Activated CD4-positive, alpha-beta memory T cell treated with anti-CD3 and anti-CD28 coated beads for 36 hours (primary cell): ENCODE measurements at regions of chr6 and their contacts with region 1.

Region 1: DNA sequence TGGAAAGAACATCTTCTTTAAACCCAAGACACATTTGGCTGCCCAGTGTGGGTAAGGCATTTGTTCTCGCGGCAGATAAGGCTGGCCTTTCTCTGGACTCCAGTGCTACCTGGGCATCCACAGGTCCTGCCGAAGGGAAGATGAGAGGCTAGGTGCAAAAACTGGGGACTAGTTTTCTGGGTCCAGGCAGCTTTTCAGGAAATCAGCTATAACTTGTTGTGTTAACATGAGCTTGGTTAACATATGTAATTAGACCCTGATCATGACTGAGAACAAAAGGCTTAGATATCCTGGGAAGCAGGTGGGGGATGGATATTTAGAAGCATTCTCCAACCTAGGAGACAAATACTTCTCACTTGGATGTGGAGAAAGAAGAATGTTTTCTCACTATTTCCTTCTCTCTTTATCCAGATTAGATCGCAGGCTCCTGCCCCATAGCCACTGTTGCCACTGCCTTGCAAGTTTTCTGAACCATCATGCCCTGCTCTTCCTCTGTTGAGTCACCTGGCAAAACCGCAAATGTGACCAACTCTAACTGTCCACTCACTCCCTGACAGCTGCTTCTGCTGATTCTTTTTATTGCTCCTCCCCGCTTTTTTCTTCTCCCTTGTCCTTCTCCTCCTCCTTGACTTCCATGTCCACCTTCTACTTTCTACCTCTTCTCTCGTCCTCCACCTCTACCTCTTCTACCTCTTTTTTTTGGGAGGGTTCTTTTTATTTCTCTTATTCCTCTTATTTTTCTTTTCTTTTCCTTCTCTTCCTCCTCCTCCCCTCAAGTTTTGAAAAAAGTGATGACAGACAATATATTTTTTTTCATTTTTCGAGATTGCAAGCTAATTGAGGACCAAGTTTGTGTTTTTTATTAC is 258.1 kb downstream of the UTRN start:
- DNase-seq: peak; percentile 32
- H3K4me3 Mint-ChIP-seq: no peak overlapping the region
- H3K27ac Mint-ChIP-seq: no peak overlapping the region
- H3K4me1 Mint-ChIP-seq: peaks cover 20% of the 10 kb centered on the region
- H3K27me3 Mint-ChIP-seq: no peaks in the 10 kb centered on the region

Region 2: GRCh38 chr6:143940011-143940597 is 603.1 kb before region 1 on chr6:
- CTCF ChIA-PET with region 1: no interaction called
- POLR2A ChIA-PET with region 1: no interaction called
- intact Hi-C with region 1: no loop called
- DNase-seq: peak; percentile 70
- H3K4me3 Mint-ChIP-seq: no peak overlapping the region
- H3K27ac Mint-ChIP-seq: no peak overlapping the region
- H3K4me1 Mint-ChIP-seq: peaks cover 2% of the 10 kb centered on the region
- H3K27me3 Mint-ChIP-seq: peaks cover 2% of the 10 kb centered on the region

Region 3: GRCh38 chr6:144248476-144249301 is 294.6 kb before region 1 on chr6:
- CTCF ChIA-PET with region 1: no interaction called
- POLR2A ChIA-PET with region 1: no interaction called
- intact Hi-C with region 1: loop called (anchors 1 kb)
- DNase-seq: peak; percentile 29
- H3K4me3 Mint-ChIP-seq: peak overlapping the region; percentile 21
- H3K27ac Mint-ChIP-seq: peak overlapping the region; percentile 71
- H3K4me1 Mint-ChIP-seq: peaks cover 18% of the 10 kb centered on the region
- H3K27me3 Mint-ChIP-seq: peaks cover 22% of the 10 kb centered on the region

Region 4: DNA sequence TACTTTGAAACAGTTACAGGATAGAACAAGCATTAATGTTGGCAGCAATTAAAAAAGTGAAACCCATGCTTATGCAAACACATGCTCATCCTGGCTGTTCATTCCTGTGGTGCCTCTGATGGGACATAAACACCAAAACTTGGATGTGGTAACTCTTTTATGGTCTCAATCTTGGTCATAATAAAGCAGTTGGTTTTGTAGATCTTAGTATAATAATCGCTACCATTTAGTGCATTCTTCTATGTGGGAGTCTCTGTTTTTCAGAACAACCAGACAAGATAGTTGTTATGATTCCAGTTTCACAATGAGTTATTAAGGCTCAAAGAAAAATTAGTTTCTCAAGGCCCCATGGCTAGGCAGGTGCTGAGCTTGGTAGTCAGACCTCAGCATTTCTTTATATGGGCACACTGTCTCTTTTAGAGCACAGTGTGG is 74.1 kb before region 1 on chr6:
- CTCF ChIA-PET with region 1: no interaction called
- POLR2A ChIA-PET with region 1: no interaction called
- intact Hi-C with region 1: loop called (anchors 1 kb)
- DNase-seq: peak; percentile 46
- H3K4me3 Mint-ChIP-seq: peak overlapping the region; percentile 59
- H3K27ac Mint-ChIP-seq: peak overlapping the region; percentile 49
- H3K4me1 Mint-ChIP-seq: peaks cover 31% of the 10 kb centered on the region
- H3K27me3 Mint-ChIP-seq: no peaks in the 10 kb centered on the region

Region 5: DNA sequence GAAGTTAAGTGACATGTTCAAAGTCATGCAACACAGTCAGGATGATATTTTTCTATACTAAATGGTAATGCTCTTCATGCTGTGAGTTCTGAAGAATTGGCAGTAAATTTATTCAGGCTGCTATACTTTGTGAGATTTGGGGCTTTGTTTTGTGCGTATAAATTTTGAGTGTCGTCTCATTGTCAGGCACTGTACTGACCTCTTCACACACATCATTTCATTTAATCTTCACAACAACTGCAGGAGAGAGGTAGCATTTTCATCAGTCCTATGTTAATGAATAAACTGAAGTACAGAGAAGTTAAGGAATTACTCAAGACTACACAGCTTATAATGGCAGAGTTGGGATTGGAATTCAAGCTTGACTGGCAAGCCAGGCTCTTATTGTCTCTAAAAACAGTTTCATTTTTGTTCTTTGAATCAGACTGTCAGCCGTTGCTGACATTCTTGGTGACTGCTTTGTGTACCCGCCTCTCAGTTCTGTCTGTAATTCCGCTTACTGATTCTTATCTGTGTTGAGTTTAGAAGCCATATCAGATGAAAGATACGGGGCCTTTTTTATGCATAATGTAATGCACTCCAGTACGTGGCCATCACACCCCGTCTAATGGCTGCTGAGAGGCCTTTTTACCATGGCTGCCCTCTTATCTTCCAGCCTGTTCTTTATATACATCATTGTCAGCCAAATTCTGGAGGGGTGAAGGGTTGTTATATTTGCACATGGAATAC is 16.8 kb after region 1 on chr6:
- CTCF ChIA-PET with region 1: no interaction called
- POLR2A ChIA-PET with region 1: interaction called, 3 read pairs
- intact Hi-C with region 1: loop called (anchors 1 kb)
- DNase-seq: peak; percentile 45
- H3K4me3 Mint-ChIP-seq: peak overlapping the region; percentile 56
- H3K27ac Mint-ChIP-seq: peak overlapping the region; percentile 82
- H3K4me1 Mint-ChIP-seq: peaks cover 34% of the 10 kb centered on the region
- H3K27me3 Mint-ChIP-seq: no peaks in the 10 kb centered on the region

Region 6: GRCh38 chr6:144595266-144595665 is 52.0 kb after region 1 on chr6:
- CTCF ChIA-PET with region 1: no interaction called
- POLR2A ChIA-PET with region 1: no interaction called
- intact Hi-C with region 1: loop called (anchors 1 kb)
- DNase-seq: no peak
- H3K4me3 Mint-ChIP-seq: no peak overlapping the region
- H3K27ac Mint-ChIP-seq: no peak overlapping the region
- H3K4me1 Mint-ChIP-seq: peaks cover 18% of the 10 kb centered on the region
- H3K27me3 Mint-ChIP-seq: no peaks in the 10 kb centered on the region

Region 7: GRCh38 chr6:144653885-144654505 is 110.8 kb after region 1 on chr6:
- CTCF ChIA-PET with region 1: no interaction called
- POLR2A ChIA-PET with region 1: no interaction called
- intact Hi-C with region 1: loop called (anchors 5 kb)
- DNase-seq: no peak
- H3K4me3 Mint-ChIP-seq: peak overlapping the region; percentile 13
- H3K27ac Mint-ChIP-seq: no peak overlapping the region
- H3K4me1 Mint-ChIP-seq: peaks cover 42% of the 10 kb centered on the region
- H3K27me3 Mint-ChIP-seq: no peaks in the 10 kb centered on the region

Region 8: DNA sequence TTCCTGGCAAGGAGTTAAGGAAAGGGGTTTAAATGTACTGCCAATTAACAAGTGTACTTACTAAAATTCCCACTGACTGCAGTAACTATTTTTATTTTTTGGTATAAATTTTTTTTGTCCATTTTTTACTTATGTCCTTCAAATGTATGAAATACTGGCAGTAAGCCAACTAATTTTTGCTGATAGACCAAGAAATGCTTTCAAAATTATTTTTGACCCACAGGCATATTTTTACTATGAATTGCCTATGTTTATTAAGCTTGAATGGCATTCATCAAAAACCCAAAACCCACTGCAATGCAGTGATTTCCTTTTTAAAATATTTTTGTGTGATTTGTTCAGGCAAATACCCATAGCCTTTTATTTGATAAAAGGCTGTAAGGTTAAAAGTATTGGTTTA is 301.9 kb after region 1 on chr6:
- CTCF ChIA-PET with region 1: no interaction called
- POLR2A ChIA-PET with region 1: no interaction called
- intact Hi-C with region 1: no loop called
- DNase-seq: no peak
- H3K4me3 Mint-ChIP-seq: no peak overlapping the region
- H3K27ac Mint-ChIP-seq: no peak overlapping the region
- H3K4me1 Mint-ChIP-seq: peaks cover 2% of the 10 kb centered on the region
- H3K27me3 Mint-ChIP-seq: no peaks in the 10 kb centered on the region